ENCODE measurements at regions of chr6 and their contacts with region 1.

Region 1: GRCh38 chr6:46015119-46015875 is at the start of gene CLIC5:
- DNase-seq: peak; percentile 70
- H3K4me3 ChIP-seq: peak within 1 kb of the TSS; percentile 55
- H3K27ac ChIP-seq: peak within 1 kb of the TSS; percentile 72
- H3K4me1 ChIP-seq: peaks cover 3% of the 10 kb centered on the region
- H3K27me3 ChIP-seq: no peaks in the 10 kb centered on the region
- CTCF ChIP-seq: no peak
- total RNA-seq, gene CLIC5: 72.8 to 74.9 TPM

Region 2: GRCh38 chr6:45946352-45946751 is 68.9 kb before region 1 on chr6:
- intact Hi-C with region 1: loop called (anchors 5 kb)
- DNase-seq: no peak
- H3K4me3 ChIP-seq: no peak overlapping the region
- H3K27ac ChIP-seq: no peak overlapping the region
- H3K4me1 ChIP-seq: peaks cover 3% of the 10 kb centered on the region
- H3K27me3 ChIP-seq: no peaks in the 10 kb centered on the region
- CTCF ChIP-seq: no peak